GM13976 (cell line): ENCODE measurements at regions of chr5 and their contacts with region 1.

Region 1: DNA sequence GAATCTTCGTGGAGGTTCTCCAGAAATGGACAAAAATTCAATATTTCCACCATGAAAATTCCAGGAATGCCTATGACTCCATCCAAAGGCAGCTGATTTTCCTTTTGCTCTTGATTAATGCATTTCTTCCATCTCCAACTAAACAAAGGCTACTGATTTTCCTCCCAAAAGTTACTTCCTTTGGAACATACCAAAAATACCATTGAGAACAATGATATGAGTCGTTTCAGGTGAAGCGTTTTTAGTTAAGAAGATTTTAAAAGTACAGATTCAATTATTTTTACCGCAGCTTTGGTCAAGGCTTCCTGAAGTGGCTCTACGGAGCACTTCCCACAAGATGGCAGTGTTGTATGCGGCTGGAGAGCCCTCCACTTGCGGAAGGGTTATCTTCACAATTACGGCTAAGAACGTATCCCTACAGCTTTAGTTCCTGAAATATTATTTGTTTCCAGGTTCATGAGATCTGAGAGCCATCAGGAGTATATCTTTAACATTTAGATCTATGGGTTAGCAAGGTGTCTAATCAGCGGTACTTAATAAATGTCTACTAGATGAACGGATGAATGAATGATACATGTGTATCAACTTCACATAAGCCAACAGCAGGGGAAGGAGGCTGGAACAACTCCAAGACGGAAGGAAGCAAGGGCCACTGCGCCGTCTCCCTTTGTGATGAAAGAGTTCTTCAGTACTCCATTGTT is 35.9 kb upstream of the ARSB start:
- DNase-seq: peak; percentile 46
- CTCF ChIP-seq: peak; percentile 71

Region 2: DNA sequence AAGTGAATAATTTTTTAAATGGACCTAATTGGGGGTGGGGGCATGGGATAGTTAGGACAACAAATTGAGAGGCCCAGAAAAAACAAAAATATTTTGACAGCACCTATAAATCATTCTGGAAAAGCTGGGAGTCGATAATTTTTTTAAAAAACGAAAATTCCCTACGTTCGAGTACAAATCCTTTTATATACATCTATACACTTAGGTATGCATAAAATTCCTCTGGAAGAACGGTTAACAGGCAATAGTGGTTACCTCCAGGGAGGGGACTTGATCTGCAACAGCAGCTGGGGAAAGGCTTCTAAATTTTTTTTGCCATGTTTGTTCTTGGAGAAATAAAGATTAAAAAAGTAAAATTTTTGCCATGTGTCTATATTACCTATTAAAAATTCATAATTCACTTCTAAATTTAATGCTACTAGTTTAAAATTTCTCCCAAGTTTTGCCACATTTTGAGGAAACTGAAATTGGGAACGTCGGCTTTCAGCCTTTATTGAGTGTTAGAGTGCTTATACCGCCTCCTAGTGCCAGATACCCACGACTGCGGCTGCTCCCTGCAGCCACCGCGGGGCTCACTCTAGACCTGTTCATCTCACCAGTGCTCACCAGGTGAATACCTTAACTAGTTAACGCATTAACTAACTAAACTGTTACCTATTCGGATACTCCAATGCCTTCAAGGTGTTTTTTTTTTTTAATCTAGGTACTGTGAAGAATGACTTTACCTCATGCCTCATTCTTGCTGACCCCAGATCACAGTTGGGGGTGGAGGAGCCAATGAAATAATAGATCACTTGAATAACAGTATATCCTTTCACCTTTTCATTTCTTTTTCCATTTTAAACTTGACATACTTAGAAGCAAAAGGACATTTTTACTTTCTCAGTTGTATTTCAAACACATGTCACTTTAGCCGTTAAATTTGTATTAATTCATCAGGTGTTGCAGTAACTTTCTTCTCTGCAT is 88.8 kb after region 1 on chr5:
- in situ Hi-C with region 1: loop called (anchors 10 kb)
- DNase-seq: peak; percentile 65
- CTCF ChIP-seq: peak; percentile 36

Region 3: DNA sequence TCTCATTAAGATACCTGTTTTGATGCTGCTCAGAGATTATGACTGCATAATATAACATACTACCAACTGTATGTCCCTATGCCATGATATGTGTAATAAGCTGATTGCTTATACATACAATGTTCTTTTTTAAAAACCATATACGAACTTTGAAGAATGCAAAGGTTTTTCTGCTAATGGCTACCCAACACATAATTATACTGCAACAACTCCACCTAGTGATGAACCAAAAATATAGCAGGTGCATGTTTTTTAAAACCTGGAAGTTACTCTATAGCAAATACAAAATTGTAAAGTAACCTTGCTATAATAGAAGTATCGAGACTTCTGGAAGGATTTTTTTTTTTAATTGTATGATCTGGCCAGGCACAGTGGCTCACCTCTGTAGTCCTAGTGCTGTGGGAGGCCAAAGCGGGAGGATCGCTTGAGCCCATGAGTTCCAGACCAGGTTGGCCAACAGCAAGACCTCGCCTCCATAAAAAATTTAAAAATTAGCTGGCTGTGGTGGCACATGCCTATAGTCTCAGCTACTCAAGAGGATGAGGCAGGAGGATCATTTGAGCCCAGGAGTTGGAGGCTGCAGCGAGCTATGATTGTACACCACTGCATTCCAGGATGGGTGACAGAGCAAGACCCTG is 443.8 kb after region 1 on chr5:
- in situ Hi-C with region 1: loop called (anchors 10 kb)
- DNase-seq: peak; percentile 55
- CTCF ChIP-seq: peak; percentile 49